Thyroid gland (tissue), 4 donors: ENCODE measurements at regions of chr17 and their contacts with region 1.

Region 1: DNA sequence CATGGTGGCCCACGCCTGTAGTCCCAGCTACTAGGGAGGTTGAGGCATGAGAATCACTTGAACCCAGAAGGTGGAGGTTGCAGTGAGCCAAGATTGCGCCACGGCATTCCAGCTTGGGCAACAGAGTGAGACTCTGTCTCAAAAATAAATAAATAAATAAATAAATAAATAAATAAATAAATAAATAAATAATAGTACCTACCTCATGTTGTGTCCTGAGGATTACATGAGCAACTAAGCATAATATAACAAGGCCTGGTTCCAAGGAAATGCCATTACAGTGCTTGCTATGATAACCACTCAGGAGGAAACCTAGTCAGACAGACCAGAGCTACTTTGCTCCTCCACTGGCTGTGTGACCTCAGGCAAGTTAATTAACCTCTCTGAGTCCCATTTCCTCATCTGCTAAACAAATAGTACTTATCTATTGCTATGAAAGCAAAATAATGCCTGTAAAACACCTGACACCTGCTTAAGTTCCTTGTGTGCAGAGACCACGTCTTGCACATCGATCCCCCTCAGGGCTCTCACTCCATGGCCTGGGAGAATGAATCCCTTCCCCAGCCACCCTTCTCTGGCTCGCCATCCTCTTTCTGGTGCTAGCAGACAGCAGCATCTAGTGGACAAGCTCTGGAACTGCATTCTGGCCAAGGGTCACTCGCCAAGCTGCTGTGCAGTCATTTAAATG is 7.5 kb downstream of the EPOP start:
- DNase-seq: peak; percentile 62
- H3K4me3 ChIP-seq: no peak overlapping the region
- H3K27ac ChIP-seq: no peak overlapping the region
- H3K4me1 ChIP-seq: no peaks in the 10 kb centered on the region
- H3K27me3 ChIP-seq: no peaks in the 10 kb centered on the region
- CTCF ChIP-seq: peak; percentile 98 to 99 (median 98)
- POLR2A ChIP-seq: no peak

Region 2: GRCh38 chr17:38485146-38485468 is 182.1 kb before region 1 on chr17:
- intact Hi-C with region 1: loop called (anchors 5 kb)
- DNase-seq: no peak
- H3K4me3 ChIP-seq: no peak overlapping the region
- H3K27ac ChIP-seq: no peak overlapping the region
- H3K4me1 ChIP-seq: peaks cover 0 to 3% of the 10 kb centered on the region in 2 donors
- H3K27me3 ChIP-seq: no peaks in the 10 kb centered on the region
- CTCF ChIP-seq: no peak
- POLR2A ChIP-seq: no peak

Region 3: DNA sequence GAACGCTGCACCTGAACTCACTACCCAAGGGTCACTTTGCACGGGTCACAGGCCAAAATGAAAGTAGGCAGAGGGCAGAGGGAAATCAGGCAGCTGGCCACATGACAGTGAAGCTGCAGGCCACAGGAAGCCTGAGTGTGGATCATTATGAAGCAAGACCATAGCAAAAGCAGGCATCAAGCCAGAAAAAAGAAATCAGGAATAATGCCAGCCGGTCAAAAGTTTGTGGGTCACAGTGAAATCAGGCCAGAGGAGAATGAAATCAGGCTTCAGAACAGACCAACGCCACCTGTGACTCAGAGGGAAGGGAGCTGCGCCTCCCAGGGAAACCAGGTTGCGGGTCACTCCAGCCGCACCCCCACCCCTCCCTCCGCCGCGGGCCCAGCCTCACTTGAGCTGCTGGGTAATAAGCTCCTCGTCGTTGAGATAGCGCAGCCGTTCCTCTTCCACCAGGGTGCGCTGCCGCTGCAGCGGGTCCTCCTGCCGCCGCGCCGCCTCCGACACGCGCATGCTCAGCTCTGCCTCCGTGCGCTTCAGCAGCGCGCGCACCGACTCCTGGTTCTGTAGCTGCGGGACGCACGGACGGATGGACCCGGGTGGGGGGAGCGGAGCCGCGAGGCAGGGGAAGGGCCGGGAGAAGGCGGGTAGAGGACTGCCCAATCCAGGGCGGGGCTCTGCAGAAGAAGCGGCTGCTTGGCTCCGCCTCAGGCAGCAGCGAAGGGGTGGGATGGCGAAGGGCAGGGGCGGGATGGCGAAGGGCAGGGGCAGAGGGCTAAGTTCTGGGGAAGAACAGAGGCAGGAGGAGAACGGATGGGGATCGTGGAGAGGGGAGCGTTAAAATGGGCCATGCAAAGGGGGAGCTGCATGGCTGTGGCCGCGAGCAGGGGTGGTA is 109.2 kb before region 1 on chr17:
- intact Hi-C with region 1: loop called (anchors 2 kb)
- DNase-seq: peak; percentile 94
- H3K4me3 ChIP-seq: peak overlapping the region; percentile 2 to 27 (median 15)
- H3K27ac ChIP-seq: no peak overlapping the region
- H3K4me1 ChIP-seq: peaks cover 17 to 31% of the 10 kb centered on the region in 2 donors
- H3K27me3 ChIP-seq: peaks cover 4% of the 10 kb centered on the region
- CTCF ChIP-seq: peak; percentile 62 to 99 (median 88)
- POLR2A ChIP-seq: peak in 1 of 2 donors; percentile 28

Region 4: GRCh38 chr17:38619937-38620550 is 47.2 kb before region 1 on chr17:
- intact Hi-C with region 1: no loop called
- DNase-seq: no peak
- H3K4me3 ChIP-seq: no peak overlapping the region
- H3K27ac ChIP-seq: no peak overlapping the region
- H3K4me1 ChIP-seq: no peaks in the 10 kb centered on the region
- H3K27me3 ChIP-seq: no peaks in the 10 kb centered on the region
- CTCF ChIP-seq: no peak
- POLR2A ChIP-seq: no peak

Region 5: GRCh38 chr17:38768417-38768816 is 101.2 kb after region 1 on chr17:
- intact Hi-C with region 1: no loop called
- DNase-seq: peak; percentile 73 to 75
- H3K4me3 ChIP-seq: no peak overlapping the region
- H3K27ac ChIP-seq: peak overlapping the region in 2 of 3 donors; percentile 13 to 28
- H3K4me1 ChIP-seq: peaks cover 3 to 5% of the 10 kb centered on the region in 2 donors
- H3K27me3 ChIP-seq: no peaks in the 10 kb centered on the region
- CTCF ChIP-seq: no peak
- POLR2A ChIP-seq: no peak